SK-N-SH (cell line): ENCODE measurements at regions of chr17 and their contacts with region 1.

Region 1: DNA sequence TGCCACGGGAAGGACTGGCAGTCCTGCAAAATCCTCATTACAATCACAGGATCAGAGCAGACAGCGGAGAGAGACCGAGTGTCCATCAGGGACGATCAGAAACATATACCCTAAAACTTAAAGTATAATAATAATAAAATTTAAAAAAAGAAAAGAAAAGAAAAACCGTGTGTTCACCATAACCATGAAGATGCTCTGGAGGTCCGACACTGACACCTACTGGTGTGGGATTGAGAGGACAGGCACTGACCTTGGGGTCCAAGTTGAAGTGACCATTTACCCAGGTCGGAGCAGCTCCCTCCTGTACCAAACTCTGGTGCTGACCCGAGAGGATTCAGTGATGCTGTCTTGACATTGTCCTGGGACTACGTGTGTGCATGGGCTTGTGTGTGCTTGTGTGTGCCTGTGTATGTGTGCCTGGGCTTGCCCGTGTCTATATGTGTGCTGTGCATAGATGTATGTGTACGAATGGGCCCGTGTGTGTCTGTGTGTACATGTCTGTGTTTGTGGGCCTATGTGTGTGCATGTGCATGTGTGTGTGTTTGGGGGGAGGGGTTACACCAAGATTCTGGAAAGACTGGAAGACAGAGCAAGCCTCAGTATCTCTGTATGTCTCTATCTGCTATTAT is 10.0 kb upstream of the CD300LD start:
- DNase-seq: peak; percentile 68
- H3K4me3 ChIP-seq: peak overlapping the region in 1 of 2 experiments; percentile 35; a peak in 1 of 4 replicates
- H3K27ac ChIP-seq: no peak overlapping the region
- H3K4me1 ChIP-seq: peaks cover 0 to 7% of the 10 kb centered on the region in 2 experiments; a peak in 1 of 4 replicates
- H3K27me3 ChIP-seq: no peaks in the 10 kb centered on the region
- CTCF ChIP-seq: peak; percentile 40
- EP300 ChIP-seq: no peak
- RAD21 ChIP-seq: peak; percentile 68

Region 2: GRCh38 chr17:74573169-74573568 is 28.9 kb before region 1 on chr17:
- CTCF ChIA-PET with region 1: interaction called, 28 read pairs
- POLR2A ChIA-PET with region 1: no interaction called
- DNase-seq: no peak
- H3K4me3 ChIP-seq: no peak overlapping the region
- H3K27ac ChIP-seq: no peak overlapping the region
- H3K4me1 ChIP-seq: no peaks in the 10 kb centered on the region
- H3K27me3 ChIP-seq: no peaks in the 10 kb centered on the region
- CTCF ChIP-seq: no peak
- EP300 ChIP-seq: no peak
- RAD21 ChIP-seq: no peak

Region 3: DNA sequence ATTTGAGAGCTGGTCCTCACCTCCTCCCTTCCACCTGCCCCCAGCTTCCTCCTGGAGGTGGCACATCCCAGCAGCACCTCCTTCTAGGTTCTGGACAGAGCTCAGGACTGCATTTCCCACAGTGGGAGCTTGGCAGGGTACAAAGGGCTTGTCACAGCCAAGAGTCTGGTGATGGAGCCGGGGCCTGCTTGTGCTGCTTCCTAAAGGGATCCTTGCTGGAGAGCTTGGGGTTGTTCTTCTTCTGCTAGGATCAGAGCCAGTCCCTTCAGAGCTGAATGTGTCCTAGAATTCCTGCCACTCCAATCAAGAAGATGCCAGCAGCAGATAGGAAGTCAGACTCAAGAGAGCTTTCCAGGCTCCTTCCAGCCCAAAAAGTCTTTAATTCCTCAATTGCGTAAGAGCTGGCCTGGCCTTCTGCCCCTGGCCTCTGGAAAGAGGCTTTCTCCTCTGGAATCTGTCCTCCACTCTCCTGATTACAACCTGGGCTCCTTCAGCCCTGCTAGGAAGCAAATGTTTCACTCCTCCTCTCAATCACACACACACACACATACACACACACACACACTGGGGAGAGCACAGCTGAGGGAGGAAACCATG is 17.1 kb after region 1 on chr17:
- CTCF ChIA-PET with region 1: interaction called, 10 read pairs
- POLR2A ChIA-PET with region 1: no interaction called
- DNase-seq: no peak
- H3K4me3 ChIP-seq: no peak overlapping the region
- H3K27ac ChIP-seq: no peak overlapping the region
- H3K4me1 ChIP-seq: no peaks in the 10 kb centered on the region
- H3K27me3 ChIP-seq: no peaks in the 10 kb centered on the region
- CTCF ChIP-seq: no peak
- EP300 ChIP-seq: no peak
- RAD21 ChIP-seq: no peak